ENCODE measurements at regions of chr16 and their contacts with region 1.

Region 1: DNA sequence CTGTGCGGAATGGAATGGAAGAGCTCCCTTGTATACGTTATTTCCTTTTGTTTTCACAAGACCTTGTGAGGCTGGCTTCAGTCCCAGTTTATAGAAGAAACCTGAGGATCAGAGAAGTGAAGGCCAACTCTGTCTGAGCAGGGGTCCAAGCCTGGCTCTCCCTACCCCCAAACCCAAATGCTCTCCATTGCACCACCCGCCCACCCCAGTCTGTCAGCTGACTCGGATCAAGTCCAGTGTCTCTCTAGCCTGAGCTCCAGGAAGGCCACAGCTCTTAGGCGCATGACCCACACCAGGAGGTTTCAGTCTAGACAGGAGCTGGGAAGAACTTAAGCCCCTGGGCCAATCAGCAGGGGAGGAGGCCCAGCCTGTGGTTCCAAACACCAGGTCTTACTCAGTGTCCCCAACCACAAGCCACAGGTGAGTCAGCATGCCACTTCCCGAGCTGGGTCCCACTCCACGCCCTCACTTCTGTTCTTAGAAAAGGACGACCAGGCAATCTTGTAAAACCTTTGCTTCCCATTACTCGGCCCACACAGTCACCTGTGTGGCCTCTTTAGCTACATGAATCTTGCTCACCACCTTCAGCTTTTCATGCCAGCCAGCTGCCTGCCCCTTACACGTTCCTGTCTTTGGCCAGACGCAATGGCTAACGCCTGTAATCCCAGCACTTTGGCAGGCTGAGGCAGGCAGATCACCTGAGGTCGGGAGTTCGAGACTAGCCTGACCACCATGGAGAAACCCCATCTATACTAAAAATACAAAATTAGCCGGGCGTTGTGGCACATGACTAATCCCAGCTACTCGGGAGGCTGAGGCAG is 27.8 kb downstream of the TK2 start:
- DNase-seq: peak; percentile 92
- H3K4me3 Mint-ChIP-seq: peak overlapping the region; percentile 51
- H3K27ac Mint-ChIP-seq: peak overlapping the region; percentile 91
- H3K4me1 Mint-ChIP-seq: peaks cover 97% of the 10 kb centered on the region
- H3K27me3 Mint-ChIP-seq: peaks cover 4% of the 10 kb centered on the region

Region 2: GRCh38 chr16:66552286-66553177 is 30.4 kb after region 1 on chr16 and contains the start of gene CKLF:
- CTCF ChIA-PET with region 1: interaction called, 39 read pairs
- DNase-seq: peak; percentile 92
- H3K4me3 Mint-ChIP-seq: peak within 1 kb of the TSS; percentile 89
- H3K27ac Mint-ChIP-seq: peak within 1 kb of the TSS; percentile 92
- H3K4me1 Mint-ChIP-seq: peaks cover 79% of the 10 kb centered on the region
- H3K27me3 Mint-ChIP-seq: peaks cover 4% of the 10 kb centered on the region

Region 3: GRCh38 chr16:66650707-66651473 is 128.7 kb after region 1 on chr16:
- CTCF ChIA-PET with region 1: no interaction called
- DNase-seq: peak; percentile 89
- H3K4me3 Mint-ChIP-seq: peak overlapping the region; percentile 17
- H3K27ac Mint-ChIP-seq: no peak overlapping the region
- H3K4me1 Mint-ChIP-seq: peaks cover 18% of the 10 kb centered on the region
- H3K27me3 Mint-ChIP-seq: peaks cover 26% of the 10 kb centered on the region

Measured in activated naive CD4-positive, alpha-beta T cell treated with anti-CD3 and anti-CD28 coated beads, Interleukin-2, amount 10 ng/mL, durations not matched to agents 7 days and 5 days (primary cell).